CD8-positive, alpha-beta T cell (primary cell): ENCODE measurements at regions of chr2 and their contacts with region 1.

Region 1: DNA sequence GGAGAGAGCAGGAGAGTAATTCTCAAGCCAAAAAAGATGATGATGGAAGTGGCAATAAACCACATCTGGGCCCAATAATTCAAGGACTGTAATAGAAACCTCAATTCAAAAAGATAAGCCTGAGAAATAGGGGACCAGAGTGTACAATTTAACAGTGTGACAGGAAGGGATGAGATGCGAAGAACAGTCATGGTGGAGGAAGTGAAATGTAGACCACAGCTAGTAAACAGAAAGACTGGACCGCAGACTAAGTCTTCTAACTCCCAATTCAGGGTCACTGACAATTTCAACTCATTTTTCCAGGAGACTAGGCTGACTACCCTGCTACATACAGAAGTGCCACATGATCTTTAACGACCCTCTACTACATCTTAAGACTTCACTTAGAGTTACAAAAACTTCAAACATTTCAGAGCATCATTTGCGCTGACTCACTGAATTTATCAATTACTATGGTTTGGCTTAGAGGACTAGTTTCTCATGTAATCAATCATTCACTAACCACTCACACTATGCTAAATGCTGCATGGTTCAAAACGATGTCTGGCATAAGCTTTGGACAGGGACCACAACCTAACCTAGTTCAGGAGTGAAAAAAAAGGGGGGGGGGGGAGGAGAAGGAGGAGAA is 9.0 kb downstream of the CUL3 start:
- DNase-seq: peak in 2 of 9 experiments; percentile 19 to 30
- ATAC-seq: peak; percentile 40
- H3K4me3 ChIP-seq: no peak overlapping the region
- H3K4me3 Mint-ChIP-seq: peak overlapping the region; percentile 20
- H3K27ac ChIP-seq: no peak overlapping the region
- H3K27ac Mint-ChIP-seq: peak overlapping the region; percentile 5
- H3K4me1 ChIP-seq: peaks cover 88% of the 10 kb centered on the region
- H3K4me1 Mint-ChIP-seq: peaks cover 93% of the 10 kb centered on the region
- H3K27me3 ChIP-seq: no peaks in the 10 kb centered on the region
- H3K27me3 Mint-ChIP-seq: no peaks in the 10 kb centered on the region
- CTCF ChIP-seq: no peak

Region 2: DNA sequence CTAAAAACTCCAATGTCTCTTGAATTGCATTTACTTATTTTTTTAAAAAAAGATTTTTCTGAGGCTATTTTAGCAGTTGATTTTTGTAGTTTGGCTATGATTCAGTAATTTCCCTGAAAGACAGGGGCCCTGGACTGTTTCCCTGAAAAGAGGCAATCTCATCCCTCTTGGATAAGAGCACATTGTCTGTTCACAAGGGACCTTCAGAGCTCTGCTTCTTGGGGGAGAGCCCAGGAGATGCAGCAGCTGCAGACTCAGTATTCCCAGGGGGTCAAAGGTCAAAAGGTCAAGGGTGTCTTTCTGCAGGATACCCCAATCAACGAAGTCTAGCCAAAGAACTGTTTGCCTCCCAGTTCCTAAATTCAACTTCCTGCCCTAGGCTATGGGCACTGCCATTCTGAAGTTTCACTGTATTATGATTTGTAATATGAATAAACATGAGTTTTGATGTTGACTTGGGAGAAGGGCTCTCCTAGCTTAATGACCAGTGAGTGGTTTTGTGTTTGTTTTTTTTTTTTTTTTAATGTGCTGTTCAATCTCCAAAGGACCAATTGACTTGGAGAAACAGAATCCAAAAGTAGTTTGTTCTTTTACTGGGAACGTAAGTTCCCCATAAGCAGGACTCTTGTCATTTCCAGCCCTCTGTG is 380.2 kb before region 1 on chr2:
- CTCF ChIA-PET with region 1: no interaction called
- POLR2A ChIA-PET with region 1: no interaction called
- intact Hi-C with region 1: no loop called
- DNase-seq: no peak
- ATAC-seq: no peak
- H3K4me3 ChIP-seq: no peak overlapping the region
- H3K4me3 Mint-ChIP-seq: no peak overlapping the region
- H3K27ac ChIP-seq: no peak overlapping the region
- H3K27ac Mint-ChIP-seq: no peak overlapping the region
- H3K4me1 ChIP-seq: no peaks in the 10 kb centered on the region
- H3K4me1 Mint-ChIP-seq: no peaks in the 10 kb centered on the region
- H3K27me3 ChIP-seq: no peaks in the 10 kb centered on the region
- H3K27me3 Mint-ChIP-seq: peaks cover 4% of the 10 kb centered on the region
- CTCF ChIP-seq: no peak

Region 3: GRCh38 chr2:224520064-224520463 is 56.1 kb before region 1 on chr2:
- CTCF ChIA-PET with region 1: no interaction called
- POLR2A ChIA-PET with region 1: no interaction called
- intact Hi-C with region 1: loop called (anchors 5 to 10 kb)
- DNase-seq: peak in 7 of 9 experiments; percentile 4 to 53 (median 29)
- ATAC-seq: peak; percentile 62
- H3K4me3 ChIP-seq: no peak overlapping the region
- H3K4me3 Mint-ChIP-seq: peak overlapping the region; percentile 13
- H3K27ac ChIP-seq: no peak overlapping the region
- H3K27ac Mint-ChIP-seq: peak overlapping the region; percentile 55
- H3K4me1 ChIP-seq: peaks cover 42% of the 10 kb centered on the region
- H3K4me1 Mint-ChIP-seq: peaks cover 69% of the 10 kb centered on the region
- H3K27me3 ChIP-seq: no peaks in the 10 kb centered on the region
- H3K27me3 Mint-ChIP-seq: no peaks in the 10 kb centered on the region
- CTCF ChIP-seq: no peak

Region 4: GRCh38 chr2:224561234-224562005 is 14.8 kb before region 1 on chr2:
- CTCF ChIA-PET with region 1: no interaction called
- POLR2A ChIA-PET with region 1: interaction called, 4 read pairs
- intact Hi-C with region 1: loop called in 1 of 2 experiments (anchors 2 kb)
- DNase-seq: no peak
- ATAC-seq: no peak
- H3K4me3 ChIP-seq: no peak overlapping the region
- H3K4me3 Mint-ChIP-seq: no peak overlapping the region
- H3K27ac ChIP-seq: no peak overlapping the region
- H3K27ac Mint-ChIP-seq: no peak overlapping the region
- H3K4me1 ChIP-seq: peaks cover 53% of the 10 kb centered on the region
- H3K4me1 Mint-ChIP-seq: peaks cover 55% of the 10 kb centered on the region
- H3K27me3 ChIP-seq: no peaks in the 10 kb centered on the region
- H3K27me3 Mint-ChIP-seq: no peaks in the 10 kb centered on the region
- CTCF ChIP-seq: no peak

Region 5: GRCh38 chr2:224678634-224679263 is 102.5 kb after region 1 on chr2:
- CTCF ChIA-PET with region 1: no interaction called
- POLR2A ChIA-PET with region 1: no interaction called
- intact Hi-C with region 1: no loop called
- DNase-seq: no peak
- ATAC-seq: no peak
- H3K4me3 ChIP-seq: no peak overlapping the region
- H3K4me3 Mint-ChIP-seq: no peak overlapping the region
- H3K27ac ChIP-seq: no peak overlapping the region
- H3K27ac Mint-ChIP-seq: no peak overlapping the region
- H3K4me1 ChIP-seq: no peaks in the 10 kb centered on the region
- H3K4me1 Mint-ChIP-seq: no peaks in the 10 kb centered on the region
- H3K27me3 ChIP-seq: no peaks in the 10 kb centered on the region
- H3K27me3 Mint-ChIP-seq: peaks cover 2% of the 10 kb centered on the region
- CTCF ChIP-seq: no peak

Region 6: DNA sequence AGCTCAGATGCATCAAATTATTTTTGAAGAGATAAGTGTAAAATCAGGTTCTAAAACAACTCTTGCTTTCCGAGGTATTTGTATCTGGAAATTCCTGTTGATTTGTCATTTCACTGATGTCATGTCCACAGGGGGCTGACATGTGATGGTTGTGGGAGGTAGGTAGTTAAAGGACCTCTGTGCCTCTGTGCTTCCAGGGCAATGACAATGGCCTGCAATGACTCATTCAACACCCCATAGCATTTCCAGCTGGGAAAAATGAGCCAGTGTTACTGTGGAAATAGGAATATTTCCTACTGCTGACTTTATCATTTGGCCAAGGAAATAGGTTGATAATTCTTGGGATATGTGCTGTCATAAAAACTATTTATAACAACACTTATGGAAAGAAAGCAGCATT is 226.2 kb after region 1 on chr2:
- CTCF ChIA-PET with region 1: no interaction called
- POLR2A ChIA-PET with region 1: no interaction called
- intact Hi-C with region 1: no loop called
- DNase-seq: no peak
- ATAC-seq: no peak
- H3K4me3 ChIP-seq: no peak overlapping the region
- H3K4me3 Mint-ChIP-seq: no peak overlapping the region
- H3K27ac ChIP-seq: no peak overlapping the region
- H3K27ac Mint-ChIP-seq: peak overlapping the region; percentile 10
- H3K4me1 ChIP-seq: no peaks in the 10 kb centered on the region
- H3K4me1 Mint-ChIP-seq: no peaks in the 10 kb centered on the region
- H3K27me3 ChIP-seq: no peaks in the 10 kb centered on the region
- H3K27me3 Mint-ChIP-seq: no peaks in the 10 kb centered on the region
- CTCF ChIP-seq: no peak

Region 7: GRCh38 chr2:224957540-224958461 is 381.6 kb after region 1 on chr2:
- CTCF ChIA-PET with region 1: no interaction called
- POLR2A ChIA-PET with region 1: no interaction called
- intact Hi-C with region 1: no loop called
- DNase-seq: peak in 1 of 9 experiments; percentile 42
- ATAC-seq: no peak
- H3K4me3 ChIP-seq: no peak overlapping the region
- H3K4me3 Mint-ChIP-seq: peak overlapping the region; percentile 33
- H3K27ac ChIP-seq: peak overlapping the region in 1 of 2 experiments; percentile 74
- H3K27ac Mint-ChIP-seq: peak overlapping the region; percentile 78
- H3K4me1 ChIP-seq: peaks cover 41% of the 10 kb centered on the region
- H3K4me1 Mint-ChIP-seq: peaks cover 83% of the 10 kb centered on the region
- H3K27me3 ChIP-seq: no peaks in the 10 kb centered on the region
- H3K27me3 Mint-ChIP-seq: no peaks in the 10 kb centered on the region
- CTCF ChIP-seq: no peak